Activated CD4-positive, alpha-beta memory T cell treated with anti-CD3 and anti-CD28 coated beads for 36 hours (primary cell): ENCODE measurements at regions of chr16 and their contacts with region 1.

Region 1: GRCh38 chr16:27179500-27180072 is 23.7 kb upstream of the KDM8 start:
- DNase-seq: peak; percentile 94
- H3K4me3 Mint-ChIP-seq: peak overlapping the region; percentile 39
- H3K27ac Mint-ChIP-seq: peak overlapping the region; percentile 48
- H3K4me1 Mint-ChIP-seq: peaks cover 36% of the 10 kb centered on the region
- H3K27me3 Mint-ChIP-seq: no peaks in the 10 kb centered on the region

Region 2: DNA sequence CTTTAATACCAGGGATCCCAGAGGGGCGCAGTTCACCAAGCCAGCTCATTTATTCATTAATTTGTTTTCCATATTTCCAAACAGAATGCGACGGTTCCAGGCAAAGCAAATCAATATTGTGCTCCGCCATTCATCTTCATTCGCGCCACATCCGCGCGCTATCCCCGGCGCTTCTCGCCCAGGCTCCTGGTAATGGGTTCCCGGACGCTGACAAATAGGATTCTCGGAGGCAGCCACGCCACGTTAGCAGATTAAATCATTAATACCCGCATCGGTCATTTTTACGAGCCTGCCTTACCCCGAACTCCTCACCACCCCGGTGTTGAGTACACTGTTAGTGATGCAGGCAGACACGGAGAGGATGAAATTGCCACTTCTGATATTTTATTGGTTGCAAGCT is 138.9 kb before region 1 on chr16:
- CTCF ChIA-PET with region 1: no interaction called
- POLR2A ChIA-PET with region 1: no interaction called
- intact Hi-C with region 1: no loop called
- DNase-seq: no peak
- H3K4me3 Mint-ChIP-seq: no peak overlapping the region
- H3K27ac Mint-ChIP-seq: no peak overlapping the region
- H3K4me1 Mint-ChIP-seq: no peaks in the 10 kb centered on the region
- H3K27me3 Mint-ChIP-seq: peaks cover 9% of the 10 kb centered on the region

Region 3: GRCh38 chr16:27154705-27155521 is 24.7 kb before region 1 on chr16:
- CTCF ChIA-PET with region 1: interaction called, 14 read pairs
- POLR2A ChIA-PET with region 1: no interaction called
- intact Hi-C with region 1: no loop called
- DNase-seq: peak; percentile 78
- H3K4me3 Mint-ChIP-seq: no peak overlapping the region
- H3K27ac Mint-ChIP-seq: no peak overlapping the region
- H3K4me1 Mint-ChIP-seq: peaks cover 6% of the 10 kb centered on the region
- H3K27me3 Mint-ChIP-seq: no peaks in the 10 kb centered on the region

Region 4: GRCh38 chr16:27195941-27196595 is 16.5 kb after region 1 on chr16:
- CTCF ChIA-PET with region 1: interaction called, 20 read pairs
- POLR2A ChIA-PET with region 1: interaction called, 5 read pairs
- intact Hi-C with region 1: loop called (anchors 1 kb)
- DNase-seq: peak; percentile 40
- H3K4me3 Mint-ChIP-seq: no peak overlapping the region
- H3K27ac Mint-ChIP-seq: peak overlapping the region; percentile 40
- H3K4me1 Mint-ChIP-seq: peaks cover 61% of the 10 kb centered on the region
- H3K27me3 Mint-ChIP-seq: no peaks in the 10 kb centered on the region

Region 5: DNA sequence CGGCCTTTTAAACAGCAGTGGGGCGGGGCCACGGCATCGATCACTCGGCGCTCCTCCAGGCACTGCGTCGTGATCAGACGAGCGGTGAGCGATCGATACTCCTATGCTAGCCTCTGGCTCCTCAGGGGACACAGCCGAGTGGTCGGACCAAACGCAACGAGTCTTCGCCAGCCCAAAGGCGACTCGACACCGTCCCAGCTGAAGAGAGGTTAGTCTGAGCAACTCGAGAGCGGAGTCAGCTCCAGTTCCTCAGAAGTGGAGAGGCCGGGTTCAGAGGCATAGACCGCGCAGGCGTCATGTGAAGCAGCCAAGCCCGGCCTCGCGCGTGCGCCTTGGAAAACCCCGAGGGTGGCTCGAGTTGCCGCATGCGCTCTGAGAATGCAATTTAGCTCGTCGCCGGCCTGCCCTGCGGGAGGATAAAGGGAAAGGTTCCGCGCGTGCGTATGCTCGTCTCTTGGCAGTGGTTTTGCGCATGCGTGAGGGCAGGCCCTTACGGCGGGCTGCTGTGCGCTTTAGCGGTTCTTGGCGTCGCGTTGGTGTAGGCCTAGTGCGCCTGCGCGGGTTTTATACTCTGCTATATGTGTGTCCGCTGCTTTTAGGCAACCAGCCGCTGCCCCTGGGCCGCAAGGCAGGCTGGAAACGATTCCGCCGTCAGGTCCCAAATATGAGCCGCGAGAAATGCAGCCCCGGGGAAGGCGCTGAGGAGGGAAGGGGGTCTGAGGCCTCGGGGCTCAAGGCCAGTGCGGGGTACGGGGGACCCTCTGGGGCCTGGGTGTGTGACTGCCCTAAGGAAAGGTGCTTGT is 24.0 kb after region 1 on chr16 and contains the start of gene KDM8:
- CTCF ChIA-PET with region 1: interaction called, 22 read pairs
- POLR2A ChIA-PET with region 1: interaction called, 5 read pairs
- intact Hi-C with region 1: loop called (anchors 1 kb)
- DNase-seq: peak; percentile 100
- H3K4me3 Mint-ChIP-seq: peak within 1 kb of the TSS; percentile 95
- H3K27ac Mint-ChIP-seq: peak within 1 kb of the TSS; percentile 97
- H3K4me1 Mint-ChIP-seq: peaks cover 47% of the 10 kb centered on the region
- H3K27me3 Mint-ChIP-seq: no peaks in the 10 kb centered on the region
- total RNA-seq, gene KDM8: 8.7 to 9.7 TPM

Region 6: GRCh38 chr16:27455700-27456099 is 276.1 kb after region 1 on chr16:
- CTCF ChIA-PET with region 1: interaction called, 6 read pairs
- POLR2A ChIA-PET with region 1: no interaction called
- intact Hi-C with region 1: loop called (anchors 2 kb)
- DNase-seq: peak; percentile 50
- H3K4me3 Mint-ChIP-seq: no peak overlapping the region
- H3K27ac Mint-ChIP-seq: peak overlapping the region; percentile 35
- H3K4me1 Mint-ChIP-seq: peaks cover 57% of the 10 kb centered on the region
- H3K27me3 Mint-ChIP-seq: no peaks in the 10 kb centered on the region

Region 7: DNA sequence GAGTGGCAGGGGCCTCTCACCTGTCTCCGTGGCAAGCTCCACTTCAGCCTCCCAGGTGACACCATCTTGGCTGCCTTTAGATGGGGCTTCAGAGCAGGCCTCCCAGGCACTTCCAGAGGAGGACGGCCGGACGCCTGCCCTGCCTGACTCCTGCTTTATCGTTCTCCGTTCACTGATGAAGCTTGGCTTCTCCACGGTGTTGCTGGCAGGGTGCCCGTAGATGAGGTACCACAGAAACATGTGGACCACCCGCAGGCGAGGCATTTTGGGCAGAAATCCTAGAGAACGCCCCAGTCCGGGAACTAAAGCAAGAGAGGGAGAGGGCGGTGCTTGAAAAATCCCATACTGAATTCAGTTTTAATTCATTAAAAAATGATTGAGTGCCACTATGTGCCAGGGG is 315.6 kb after region 1 on chr16:
- CTCF ChIA-PET with region 1: no interaction called
- POLR2A ChIA-PET with region 1: no interaction called
- intact Hi-C with region 1: no loop called
- DNase-seq: no peak
- H3K4me3 Mint-ChIP-seq: no peak overlapping the region
- H3K27ac Mint-ChIP-seq: no peak overlapping the region
- H3K4me1 Mint-ChIP-seq: no peaks in the 10 kb centered on the region
- H3K27me3 Mint-ChIP-seq: no peaks in the 10 kb centered on the region